Activated B cell treated with CpG ODN at 0.5 μM for 24 hours (primary cell): ENCODE measurements at regions of chr3 and their contacts with region 1.

Region 1: DNA sequence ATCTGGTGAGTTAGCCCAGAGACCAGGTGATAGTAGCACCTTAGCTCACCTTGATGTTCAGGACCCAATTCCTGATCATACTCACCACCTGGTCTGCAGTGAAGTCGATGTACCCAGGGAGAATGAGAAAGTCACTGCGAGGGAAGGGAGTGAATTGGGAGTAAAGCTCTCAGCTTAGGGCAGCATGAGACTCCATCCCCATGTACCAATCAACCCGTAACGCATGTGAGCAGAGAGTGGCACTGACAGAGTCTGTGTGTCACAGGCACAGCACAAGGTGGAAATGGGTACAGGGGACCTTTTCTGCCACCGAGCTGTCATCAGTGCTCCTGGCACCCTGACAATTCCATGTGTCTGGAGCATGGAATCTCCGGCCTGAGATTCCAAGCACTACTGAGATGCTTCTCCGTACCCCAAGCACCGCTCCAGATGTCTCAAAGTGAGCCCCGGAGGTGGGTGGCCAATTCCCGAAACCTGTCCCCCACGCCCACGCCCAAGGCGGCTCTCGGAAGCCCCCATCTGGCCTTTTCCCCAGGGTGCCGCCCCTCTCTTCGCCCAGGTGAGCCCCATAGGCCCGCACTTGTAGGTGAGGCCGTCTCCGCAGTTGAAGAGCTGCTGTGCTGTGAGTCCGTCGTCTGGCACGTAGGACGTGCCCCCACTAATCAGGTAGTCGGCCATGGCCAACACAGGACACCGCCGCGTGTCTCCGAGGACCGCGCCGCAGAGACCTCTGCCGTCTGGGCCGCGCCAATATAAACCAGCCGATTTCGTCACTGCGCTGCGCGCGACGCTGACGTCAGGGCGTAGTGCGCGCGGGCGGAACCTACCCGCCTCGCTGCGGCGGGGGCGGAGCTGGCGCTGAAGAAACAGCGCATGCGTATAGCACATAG is at the start of gene IMPDH2:
- DNase-seq: peak; percentile 91
- ATAC-seq: peak; percentile 90
- H3K4me3 Mint-ChIP-seq: peak within 1 kb of the TSS; percentile 93
- H3K27ac Mint-ChIP-seq: peak within 1 kb of the TSS; percentile 94
- H3K4me1 Mint-ChIP-seq: peaks cover 49% of the 10 kb centered on the region
- H3K27me3 Mint-ChIP-seq: no peaks in the 10 kb centered on the region
- CTCF ChIP-seq: no peak
- total RNA-seq, gene IMPDH2: 387 and 414 TPM in 2 replicates

Region 2: GRCh38 chr3:48394391-48394790 is 634.5 kb before region 1 on chr3:
- CTCF ChIA-PET with region 1: no interaction called
- POLR2A ChIA-PET with region 1: no interaction called
- intact Hi-C with region 1: no loop called
- DNase-seq: no peak
- ATAC-seq: no peak
- H3K4me3 Mint-ChIP-seq: no peak overlapping the region
- H3K27ac Mint-ChIP-seq: no peak overlapping the region
- H3K4me1 Mint-ChIP-seq: no peaks in the 10 kb centered on the region
- H3K27me3 Mint-ChIP-seq: peaks cover 28% of the 10 kb centered on the region
- CTCF ChIP-seq: no peak

Region 3: DNA sequence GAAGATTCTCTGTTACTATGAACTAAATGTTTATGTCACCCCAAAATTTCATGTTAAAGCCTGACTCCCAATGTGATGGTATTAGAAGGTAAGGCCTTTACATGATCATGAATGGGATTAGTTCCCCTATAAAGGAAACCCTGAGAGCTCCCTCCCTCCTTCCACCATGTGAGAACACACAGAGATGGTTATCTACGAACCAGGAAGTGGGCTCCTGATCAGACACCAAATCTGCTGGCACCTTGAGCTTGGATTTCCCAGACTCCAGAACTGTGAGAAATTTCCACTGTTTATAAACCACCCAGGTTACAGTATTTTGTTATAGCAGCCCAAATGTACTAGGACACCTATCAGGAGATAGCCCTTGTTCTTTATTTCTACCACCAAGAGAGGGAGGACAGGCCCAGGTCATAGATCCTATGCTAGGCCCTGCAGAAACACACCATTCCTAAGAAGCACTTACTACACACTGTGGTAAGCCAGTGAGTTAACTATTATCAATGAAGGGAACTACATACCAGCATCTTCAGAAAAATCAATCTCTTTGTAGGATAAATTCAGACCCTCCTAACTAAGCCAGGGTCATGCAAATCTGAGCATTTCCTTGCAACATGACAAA is 240.3 kb before region 1 on chr3:
- CTCF ChIA-PET with region 1: no interaction called
- POLR2A ChIA-PET with region 1: no interaction called
- intact Hi-C with region 1: no loop called
- DNase-seq: no peak
- ATAC-seq: no peak
- H3K4me3 Mint-ChIP-seq: no peak overlapping the region
- H3K27ac Mint-ChIP-seq: no peak overlapping the region
- H3K4me1 Mint-ChIP-seq: no peaks in the 10 kb centered on the region
- H3K27me3 Mint-ChIP-seq: no peaks in the 10 kb centered on the region
- CTCF ChIP-seq: no peak

Region 4: DNA sequence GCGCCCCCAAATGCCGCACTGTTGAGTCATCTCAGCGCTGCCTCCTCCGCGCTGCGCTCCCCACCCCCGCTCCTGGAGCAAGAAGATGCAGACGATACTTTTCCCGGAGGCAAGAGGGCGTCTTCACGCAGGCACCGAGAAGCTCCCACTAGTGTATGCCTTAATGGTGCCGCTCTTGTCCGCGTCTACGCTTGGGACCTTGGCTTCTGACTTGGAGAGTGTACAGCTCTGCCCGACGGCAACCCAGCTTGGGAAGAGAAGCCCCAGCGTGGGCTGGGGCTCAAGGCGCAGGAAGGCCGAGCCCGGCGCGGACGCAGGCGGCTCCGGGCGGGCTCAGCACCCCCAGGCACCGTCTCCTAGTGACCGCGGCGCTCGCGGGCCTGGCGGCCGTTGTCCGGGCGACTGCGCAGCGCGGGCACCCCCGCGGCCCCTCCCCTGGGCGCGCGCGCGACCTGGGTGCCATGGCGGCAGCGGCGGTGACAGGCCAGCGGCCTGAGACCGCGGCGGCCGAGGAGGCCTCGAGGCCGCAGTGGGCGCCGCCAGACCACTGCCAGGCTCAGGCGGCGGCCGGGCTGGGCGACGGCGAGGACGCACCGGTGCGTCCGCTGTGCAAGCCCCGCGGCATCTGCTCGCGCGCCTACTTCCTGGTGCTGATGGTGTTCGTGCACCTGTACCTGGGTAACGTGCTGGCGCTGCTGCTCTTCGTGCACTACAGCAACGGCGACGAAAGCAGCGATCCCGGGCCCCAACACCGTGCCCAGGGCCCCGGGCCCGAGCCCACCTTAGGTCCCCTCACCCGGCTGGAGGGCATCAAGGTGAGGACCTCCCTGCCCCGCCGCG is 38.9 kb before region 1 on chr3 and contains the start of gene P4HTM:
- CTCF ChIA-PET with region 1: interaction called, 17 read pairs
- POLR2A ChIA-PET with region 1: interaction called, 23 read pairs
- intact Hi-C with region 1: loop called (anchors 1 kb)
- DNase-seq: peak; percentile 58
- ATAC-seq: peak; percentile 64
- H3K4me3 Mint-ChIP-seq: peak within 1 kb of the TSS; percentile 92
- H3K27ac Mint-ChIP-seq: peak within 1 kb of the TSS; percentile 83
- H3K4me1 Mint-ChIP-seq: peaks cover 28% of the 10 kb centered on the region
- H3K27me3 Mint-ChIP-seq: no peaks in the 10 kb centered on the region
- CTCF ChIP-seq: no peak
- total RNA-seq, gene P4HTM: 26.0 and 34.4 TPM in 2 replicates